Left lung (tissue), 14 donors: ENCODE measurements at regions of chr6 and their contacts with region 1.

Region 1: GRCh38 chr6:16332175-16332542 is 93.8 kb downstream of the GMPR start:
- DNase-seq: peak in 3 of 4 donors; percentile 67 to 83 (median 78)
- ATAC-seq: peak; percentile 93
- H3K4me3 ChIP-seq: no peak overlapping the region
- H3K27ac ChIP-seq: no peak overlapping the region
- H3K4me1 ChIP-seq: peaks cover 4 to 44% of the 10 kb centered on the region in 2 donors
- H3K27me3 ChIP-seq: no peaks in the 10 kb centered on the region
- CTCF ChIP-seq: peak; percentile 81 to 95

Region 2: DNA sequence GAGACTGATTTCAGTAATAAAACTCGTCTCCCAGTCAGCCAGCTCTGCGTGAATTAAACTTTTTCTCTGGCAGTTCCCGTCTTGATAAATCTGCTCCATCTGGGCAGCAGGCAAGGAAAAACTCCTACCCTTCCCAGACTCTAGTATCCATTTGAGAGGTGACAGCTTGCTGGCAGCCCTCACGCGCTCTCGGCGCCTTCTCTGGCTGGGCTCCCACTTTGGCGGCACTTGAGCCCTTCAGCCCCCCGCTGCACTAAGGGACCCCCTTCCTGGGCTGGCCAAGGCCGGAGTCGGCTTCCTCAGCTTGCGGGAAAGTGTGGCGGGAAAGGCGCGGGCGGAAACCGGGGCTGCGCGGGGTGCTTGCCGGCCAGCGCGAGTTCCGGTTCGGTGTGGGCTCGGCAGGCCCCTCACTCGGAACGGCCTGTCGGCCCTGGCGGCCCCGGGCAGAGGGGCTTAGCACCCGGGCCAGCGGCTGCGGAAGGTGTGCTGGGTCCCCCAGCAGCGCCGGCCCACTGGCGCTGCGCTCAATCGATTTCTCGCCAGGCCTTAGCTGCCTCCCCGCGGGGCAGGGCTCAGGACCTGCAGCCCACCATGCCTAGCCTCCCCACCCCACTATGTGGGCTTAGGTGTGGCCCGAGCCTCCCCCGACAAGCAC is 115.5 kb before region 1 on chr6:
- intact Hi-C with region 1: no loop called
- DNase-seq: no peak
- ATAC-seq: peak; percentile 30
- H3K4me3 ChIP-seq: no peak overlapping the region
- H3K27ac ChIP-seq: no peak overlapping the region
- H3K4me1 ChIP-seq: peaks cover 2 to 13% of the 10 kb centered on the region in 2 donors
- H3K27me3 ChIP-seq: peaks cover 5 to 17% of the 10 kb centered on the region in 2 donors
- CTCF ChIP-seq: no peak

Region 3: GRCh38 chr6:16238963-16239797 is 93.0 kb before region 1 on chr6:
- intact Hi-C with region 1: no loop called
- DNase-seq: peak in 1 of 4 donors; percentile 90
- ATAC-seq: peak; percentile 42
- H3K4me3 ChIP-seq: peak overlapping the region; percentile 61
- H3K27ac ChIP-seq: peak overlapping the region; percentile 45 to 75
- H3K4me1 ChIP-seq: peaks cover 11 to 34% of the 10 kb centered on the region in 2 donors
- H3K27me3 ChIP-seq: peaks cover 0 to 21% of the 10 kb centered on the region in 2 donors
- CTCF ChIP-seq: peak; percentile 51 to 55

Region 4: GRCh38 chr6:16503970-16504415 is 171.8 kb after region 1 on chr6:
- intact Hi-C with region 1: loop called in 1 of 2 experiments (anchors 10 kb)
- DNase-seq: no peak
- ATAC-seq: no peak
- H3K4me3 ChIP-seq: no peak overlapping the region
- H3K27ac ChIP-seq: no peak overlapping the region
- H3K4me1 ChIP-seq: peaks cover 3 to 23% of the 10 kb centered on the region in 2 donors
- H3K27me3 ChIP-seq: no peaks in the 10 kb centered on the region
- CTCF ChIP-seq: no peak